ENCODE measurements at regions of chr16 and their contacts with region 1.

Region 1: GRCh38 chr16:22001591-22001990 is 675 bp upstream of the PDZD9 start:
- DNase-seq: no peak
- ATAC-seq: no peak
- H3K4me3 ChIP-seq: no peak overlapping the region
- H3K27ac ChIP-seq: no peak overlapping the region
- H3K4me1 ChIP-seq: peaks cover 6% of the 10 kb centered on the region
- H3K27me3 ChIP-seq: no peaks in the 10 kb centered on the region
- CTCF ChIP-seq: no peak

Region 2: DNA sequence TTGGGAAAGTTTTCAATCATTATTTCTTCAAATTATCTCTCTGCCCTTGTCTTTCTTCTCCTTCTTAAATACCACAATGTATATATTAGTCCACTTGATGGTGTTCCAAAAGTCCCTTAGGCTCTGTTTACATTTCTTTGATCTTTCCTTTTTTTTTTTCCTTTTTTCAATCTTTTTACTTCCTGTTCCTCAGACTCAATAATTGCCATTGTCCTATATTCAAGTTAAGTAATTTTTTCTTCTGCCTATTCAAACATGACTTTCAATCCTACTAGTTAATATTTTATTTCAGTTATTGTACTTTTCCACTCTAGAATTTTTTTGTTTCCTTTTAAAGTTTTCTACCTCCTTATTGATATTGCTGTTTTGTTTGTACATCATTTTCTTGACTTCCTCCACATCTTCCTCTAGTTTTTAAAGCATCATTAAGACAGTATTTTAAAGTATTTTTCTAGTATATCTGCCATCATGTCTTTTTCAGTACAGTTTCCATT is 64.2 kb before region 1 on chr16:
- intact Hi-C with region 1: no loop called
- DNase-seq: no peak
- ATAC-seq: no peak
- H3K4me3 ChIP-seq: no peak overlapping the region
- H3K27ac ChIP-seq: no peak overlapping the region
- H3K4me1 ChIP-seq: no peaks in the 10 kb centered on the region
- H3K27me3 ChIP-seq: no peaks in the 10 kb centered on the region
- CTCF ChIP-seq: no peak

Region 3: DNA sequence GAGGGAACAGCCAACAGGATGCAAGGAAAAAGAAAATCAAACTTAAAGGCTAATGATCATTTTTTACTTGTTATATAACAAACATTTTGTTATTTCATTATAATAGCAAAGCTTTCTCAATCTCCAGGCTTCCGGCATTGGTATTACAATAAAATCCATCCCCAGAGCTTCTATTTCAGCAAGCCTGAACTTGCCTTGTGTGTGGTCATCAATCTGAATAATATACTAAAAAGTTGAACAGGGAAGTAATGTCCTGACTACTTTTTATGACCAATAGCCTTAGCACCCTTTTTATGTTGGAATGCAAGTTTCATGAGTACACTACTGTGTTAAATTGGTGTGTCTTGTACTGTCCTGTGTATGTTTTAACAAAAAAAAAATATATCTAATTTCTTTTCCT is 63.7 kb after region 1 on chr16:
- intact Hi-C with region 1: no loop called
- DNase-seq: no peak
- ATAC-seq: no peak
- H3K4me3 ChIP-seq: no peak overlapping the region
- H3K27ac ChIP-seq: no peak overlapping the region
- H3K4me1 ChIP-seq: no peaks in the 10 kb centered on the region
- H3K27me3 ChIP-seq: no peaks in the 10 kb centered on the region
- CTCF ChIP-seq: no peak

Region 4: DNA sequence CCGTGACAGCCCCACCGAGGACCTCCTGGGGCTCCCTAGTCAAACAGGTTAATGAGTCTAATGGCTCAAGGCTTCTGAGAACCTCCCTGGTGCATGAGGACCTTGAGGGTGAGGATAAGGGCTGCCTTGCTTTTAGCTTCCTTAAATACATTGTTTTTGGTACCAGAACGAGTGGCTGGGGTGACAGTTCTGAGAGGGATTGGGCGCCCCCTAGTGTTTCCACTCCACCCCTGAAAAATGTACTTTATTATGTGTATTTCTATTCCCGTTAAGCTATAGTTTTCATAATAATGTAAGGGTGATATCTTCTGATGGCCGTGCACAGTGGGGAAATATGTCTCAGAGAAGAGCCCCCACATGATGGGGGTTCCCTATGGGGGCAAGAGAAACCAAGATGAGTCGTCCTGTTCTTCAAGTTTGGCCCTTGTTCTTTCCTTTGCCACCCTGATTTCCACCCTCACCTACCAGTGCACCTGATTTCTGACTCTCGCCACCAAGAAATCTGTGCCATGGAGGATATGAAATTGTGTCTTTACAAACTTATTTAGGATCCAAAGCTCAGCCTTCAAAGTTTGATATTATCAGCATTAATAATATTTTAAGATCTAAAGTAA is 76.2 kb after region 1 on chr16:
- intact Hi-C with region 1: loop called (anchors 5 kb)
- DNase-seq: no peak
- ATAC-seq: peak; percentile 90
- H3K4me3 ChIP-seq: no peak overlapping the region
- H3K27ac ChIP-seq: no peak overlapping the region
- H3K4me1 ChIP-seq: no peaks in the 10 kb centered on the region
- H3K27me3 ChIP-seq: no peaks in the 10 kb centered on the region
- CTCF ChIP-seq: peak; percentile 80

Region 5: DNA sequence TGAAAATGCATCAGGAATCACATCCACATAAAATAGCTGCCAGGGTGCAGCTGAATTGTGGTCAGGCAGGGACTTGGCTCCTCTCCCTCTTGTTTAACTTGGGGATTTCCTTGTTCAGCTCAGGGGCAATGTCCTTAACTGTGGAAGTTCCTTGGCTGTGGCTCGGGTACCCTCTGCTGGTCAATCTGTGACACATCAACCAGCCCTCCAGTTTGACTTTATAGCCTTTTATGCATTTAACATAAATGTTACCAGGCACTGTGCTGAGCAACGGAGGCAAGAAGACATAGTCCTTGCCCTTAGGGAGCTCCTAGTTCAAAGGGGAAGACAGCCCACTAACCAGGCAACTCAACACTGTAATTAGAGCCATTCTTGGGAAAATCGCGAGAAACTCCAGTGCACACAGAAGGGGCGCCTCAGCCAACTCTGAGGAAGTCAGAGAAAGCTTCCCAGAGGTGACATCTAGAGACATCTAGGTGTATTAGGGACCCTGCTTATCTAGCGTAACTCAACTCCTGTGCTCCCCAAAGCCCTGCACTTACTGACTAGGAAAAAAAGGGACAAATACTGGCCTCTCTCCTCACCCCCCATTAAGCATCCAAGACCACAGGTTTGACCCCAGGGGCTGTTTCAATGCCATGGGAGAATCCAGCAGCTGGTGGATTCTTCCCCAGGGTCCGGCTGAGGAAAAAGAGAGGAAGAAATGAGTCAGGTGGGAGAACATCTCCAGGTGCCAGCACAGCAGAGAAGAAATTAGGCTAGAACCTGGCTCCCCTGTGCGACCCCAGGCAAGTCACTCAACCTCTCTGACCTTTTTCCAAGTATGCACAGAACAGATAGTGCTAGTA is 187.2 kb after region 1 on chr16:
- intact Hi-C with region 1: loop called (anchors 5 kb)
- DNase-seq: peak; percentile 70
- ATAC-seq: peak; percentile 2
- H3K4me3 ChIP-seq: no peak overlapping the region
- H3K27ac ChIP-seq: peak overlapping the region; percentile 92
- H3K4me1 ChIP-seq: peaks cover 28% of the 10 kb centered on the region
- H3K27me3 ChIP-seq: no peaks in the 10 kb centered on the region
- CTCF ChIP-seq: peak; percentile 83